Sigmoid colon (tissue), 7 donors: ENCODE measurements at regions of chr4 and their contacts with region 1.

Region 1: GRCh38 chr4:168839758-168840391 is 170.2 kb downstream of the CBR4 start:
- DNase-seq: no peak
- H3K4me3 ChIP-seq: peak overlapping the region in 2 of 4 donors; percentile 7 to 18
- H3K27ac ChIP-seq: peak overlapping the region; percentile 94 to 99 (median 98)
- H3K4me1 ChIP-seq: peaks cover 0 to 95% (median 81%) of the 10 kb centered on the region in 4 donors
- H3K27me3 ChIP-seq: no peaks in the 10 kb centered on the region
- CTCF ChIP-seq: no peak
- EP300 ChIP-seq: peak; percentile 91 to 97 (median 95)
- POLR2A ChIP-seq: no peak

Region 2: DNA sequence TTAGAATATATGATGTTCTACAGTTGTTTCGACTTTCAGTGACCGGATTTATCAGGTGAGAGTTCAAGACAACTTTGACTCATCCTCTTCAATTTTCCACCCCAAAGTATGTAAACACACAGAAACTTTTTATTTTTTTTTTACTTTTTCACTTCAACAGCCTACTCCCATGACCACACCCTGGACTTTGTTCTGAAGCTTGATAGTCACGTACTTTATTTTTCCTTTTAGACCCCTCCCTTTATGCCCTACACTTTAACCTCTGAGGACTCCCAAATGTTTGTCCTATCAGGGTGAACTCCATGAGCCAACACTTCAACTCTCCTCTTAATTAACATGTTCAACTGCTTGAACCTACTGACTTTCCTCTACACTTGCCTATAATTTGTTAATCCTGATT is 518.9 kb before region 1 on chr4:
- intact Hi-C with region 1: no loop called
- DNase-seq: no peak
- H3K4me3 ChIP-seq: no peak overlapping the region
- H3K27ac ChIP-seq: no peak overlapping the region
- H3K4me1 ChIP-seq: peaks cover 0 to 15% (median 10%) of the 10 kb centered on the region in 4 donors
- H3K27me3 ChIP-seq: no peaks in the 10 kb centered on the region
- CTCF ChIP-seq: no peak
- EP300 ChIP-seq: no peak
- POLR2A ChIP-seq: no peak

Region 3: DNA sequence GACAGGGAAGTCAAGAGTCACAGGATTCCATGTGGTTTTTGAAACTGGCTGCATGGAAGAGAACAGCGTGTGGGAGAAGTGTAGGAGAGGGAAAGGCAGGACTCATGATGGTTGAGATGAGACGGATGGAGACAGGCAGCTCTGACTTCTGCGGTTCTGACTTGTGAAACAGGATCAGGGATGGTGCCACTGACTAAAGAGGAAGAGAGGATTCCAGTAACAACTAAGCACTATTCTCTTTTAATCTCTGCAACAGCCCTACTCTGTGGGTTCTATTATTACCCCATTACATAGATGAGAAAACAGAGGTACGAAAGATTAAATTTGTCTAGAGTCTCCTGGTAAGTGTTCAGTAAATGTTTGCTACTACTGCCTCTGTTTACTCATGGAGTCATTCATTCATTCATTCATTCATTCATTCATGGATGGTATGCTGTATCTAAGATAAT is 13.9 kb after region 1 on chr4:
- intact Hi-C with region 1: loop called (anchors 2 kb)
- DNase-seq: no peak
- H3K4me3 ChIP-seq: no peak overlapping the region
- H3K27ac ChIP-seq: peak overlapping the region; percentile 94 to 99 (median 98)
- H3K4me1 ChIP-seq: peaks cover 3 to 98% (median 96%) of the 10 kb centered on the region in 4 donors
- H3K27me3 ChIP-seq: no peaks in the 10 kb centered on the region
- CTCF ChIP-seq: no peak
- EP300 ChIP-seq: no peak
- POLR2A ChIP-seq: no peak

Region 4: GRCh38 chr4:168877511-168878491 is 37.9 kb after region 1 on chr4:
- intact Hi-C with region 1: loop called (anchors 5 kb)
- DNase-seq: peak; percentile 72
- H3K4me3 ChIP-seq: peak overlapping the region; percentile 23 to 49 (median 43)
- H3K27ac ChIP-seq: peak overlapping the region; percentile 77 to 99 (median 88)
- H3K4me1 ChIP-seq: peaks cover 0 to 100% (median 94%) of the 10 kb centered on the region in 4 donors
- H3K27me3 ChIP-seq: no peaks in the 10 kb centered on the region
- CTCF ChIP-seq: no peak
- EP300 ChIP-seq: no peak
- POLR2A ChIP-seq: no peak

Region 5: DNA sequence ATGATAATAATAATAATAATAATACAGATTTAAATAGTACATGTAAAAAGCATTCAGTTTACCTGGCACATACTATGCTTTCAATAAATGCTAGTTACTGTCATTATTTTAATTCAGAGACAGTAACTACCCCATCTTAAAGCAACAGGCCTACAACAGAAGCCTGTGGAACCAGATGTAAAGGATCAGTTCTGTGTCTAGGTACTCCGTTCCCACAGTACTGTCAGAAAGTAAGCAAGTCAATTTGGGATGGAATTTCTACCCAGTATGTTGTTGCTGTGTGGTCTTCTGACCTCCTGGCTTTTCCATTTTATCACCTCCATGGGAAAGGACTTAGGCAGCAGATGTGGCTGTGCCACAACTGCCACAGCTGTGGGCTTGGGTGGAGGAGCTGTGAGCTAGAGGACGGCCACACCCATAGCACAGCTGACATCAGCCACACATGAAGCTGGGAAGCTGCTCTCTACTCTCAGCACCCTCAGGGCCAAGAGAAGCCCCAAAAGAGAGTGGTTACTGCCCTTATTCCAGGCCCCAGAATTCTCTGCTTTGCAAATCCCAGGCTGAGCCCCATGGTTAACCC is 67.3 kb after region 1 on chr4:
- intact Hi-C with region 1: loop called (anchors 5 kb)
- DNase-seq: no peak
- H3K4me3 ChIP-seq: no peak overlapping the region
- H3K27ac ChIP-seq: peak overlapping the region; percentile 50 to 77 (median 70)
- H3K4me1 ChIP-seq: peaks cover 0 to 65% (median 42%) of the 10 kb centered on the region in 4 donors
- H3K27me3 ChIP-seq: no peaks in the 10 kb centered on the region
- CTCF ChIP-seq: no peak
- EP300 ChIP-seq: no peak
- POLR2A ChIP-seq: no peak